WTC11 (cell line): ENCODE measurements at regions of chr12 and their contacts with region 1.

Region 1: GRCh38 chr12:49789992-49790391 is 38.2 kb downstream of the NCKAP5L start:
- DNase-seq: peak; percentile 48
- ATAC-seq: peak; percentile 86
- H3K4me3 Mint-ChIP-seq: no peak overlapping the region
- H3K27ac Mint-ChIP-seq: peak overlapping the region; percentile 77
- H3K4me1 Mint-ChIP-seq: peaks cover 15% of the 10 kb centered on the region
- H3K27me3 Mint-ChIP-seq: no peaks in the 10 kb centered on the region; the same call in 1 of the 2 replicates
- CTCF ChIP-seq: no peak

Region 2: GRCh38 chr12:49750027-49750995 is 39.7 kb before region 1 on chr12:
- CTCF ChIA-PET with region 1: no interaction called
- POLR2A ChIA-PET with region 1: no interaction called
- DNase-seq: no peak
- ATAC-seq: peak; percentile 46
- H3K4me3 Mint-ChIP-seq: peak overlapping the region; percentile 2; the same call in 1 of the 2 replicates
- H3K27ac Mint-ChIP-seq: peak overlapping the region; percentile 87
- H3K4me1 Mint-ChIP-seq: peaks cover 29% of the 10 kb centered on the region
- H3K27me3 Mint-ChIP-seq: no peaks in the 10 kb centered on the region
- CTCF ChIP-seq: no peak

Region 3: GRCh38 chr12:49800421-49801140 is 10.6 kb after region 1 on chr12:
- CTCF ChIA-PET with region 1: interaction called, 10 read pairs
- POLR2A ChIA-PET with region 1: no interaction called
- DNase-seq: no peak
- ATAC-seq: no peak
- H3K4me3 Mint-ChIP-seq: no peak overlapping the region
- H3K27ac Mint-ChIP-seq: no peak overlapping the region; the same call in 1 of the 2 replicates
- H3K4me1 Mint-ChIP-seq: no peaks in the 10 kb centered on the region
- H3K27me3 Mint-ChIP-seq: no peaks in the 10 kb centered on the region
- CTCF ChIP-seq: no peak